Activated T-helper 2 cell treated with anti-CD3 and anti-CD28 coated beads, Interferon-gamma antibody, Interleukin-2, Interleukin-4, amounts not matched to agents 10 μg/mL and 5 μg/mL and 100 μg/mL, durations not matched to agents 14 hours and 24 hours and 36 hours (primary cell): ENCODE measurements at regions of chrX and their contacts with region 1.

Region 1: GRCh38 chrX:132631579-132632232 is 142.9 kb upstream of the MBNL3 start:
- DNase-seq: no peak
- H3K4me3 Mint-ChIP-seq: no peak overlapping the region
- H3K27ac Mint-ChIP-seq: no peak overlapping the region
- H3K4me1 Mint-ChIP-seq: no peaks in the 10 kb centered on the region
- H3K27me3 Mint-ChIP-seq: peaks cover 4% of the 10 kb centered on the region

Region 2: DNA sequence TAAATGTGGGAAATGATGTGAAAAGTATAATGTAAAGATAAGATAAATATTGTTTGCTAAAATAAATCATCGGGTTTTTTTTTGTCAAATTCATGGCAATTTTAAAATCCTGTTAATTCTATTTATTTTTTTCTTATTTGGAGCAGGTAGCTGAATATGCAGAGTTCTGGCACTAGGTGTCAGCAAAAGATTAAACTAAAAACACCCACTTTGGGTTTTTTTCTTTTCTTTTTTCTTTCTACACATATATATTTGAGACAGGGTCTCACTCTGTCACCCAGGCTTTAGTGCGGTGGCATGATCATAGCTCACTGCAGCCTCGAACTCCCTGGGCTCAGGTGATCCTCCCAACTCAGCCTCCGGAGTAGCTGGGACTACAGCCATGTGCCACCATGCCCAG is 405.5 kb before region 1 on chrX:
- intact Hi-C with region 1: loop called (anchors 5 kb)
- DNase-seq: no peak
- H3K4me3 Mint-ChIP-seq: no peak overlapping the region
- H3K27ac Mint-ChIP-seq: no peak overlapping the region
- H3K4me1 Mint-ChIP-seq: peaks cover 10% of the 10 kb centered on the region
- H3K27me3 Mint-ChIP-seq: no peaks in the 10 kb centered on the region

Region 3: DNA sequence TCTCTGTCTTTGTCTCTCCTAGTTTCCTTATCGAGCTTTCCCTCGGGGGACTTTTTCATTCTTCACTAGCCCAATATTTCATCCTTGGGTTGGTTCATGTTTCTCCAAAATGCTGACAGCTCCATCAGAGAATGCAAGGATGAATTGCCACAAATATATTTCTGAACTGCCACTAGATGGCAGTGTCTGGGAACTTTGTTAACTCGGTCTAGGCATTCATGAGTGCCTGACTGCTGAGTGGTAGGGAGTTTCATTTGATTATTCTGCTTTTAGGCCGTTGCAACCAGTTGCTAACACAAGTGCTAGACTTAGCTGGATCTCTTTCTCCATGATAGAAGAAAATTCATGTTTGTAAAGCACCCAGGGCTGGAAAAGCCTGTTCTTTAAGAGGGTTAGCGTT is 338.9 kb before region 1 on chrX:
- intact Hi-C with region 1: loop called (anchors 1 kb)
- DNase-seq: peak; percentile 8
- H3K4me3 Mint-ChIP-seq: no peak overlapping the region
- H3K27ac Mint-ChIP-seq: no peak overlapping the region
- H3K4me1 Mint-ChIP-seq: no peaks in the 10 kb centered on the region
- H3K27me3 Mint-ChIP-seq: peaks cover 4% of the 10 kb centered on the region

Region 4: GRCh38 chrX:132676561-132677186 is 45.0 kb after region 1 on chrX:
- intact Hi-C with region 1: no loop called
- DNase-seq: no peak
- H3K4me3 Mint-ChIP-seq: no peak overlapping the region
- H3K27ac Mint-ChIP-seq: no peak overlapping the region
- H3K4me1 Mint-ChIP-seq: peaks cover 5% of the 10 kb centered on the region
- H3K27me3 Mint-ChIP-seq: no peaks in the 10 kb centered on the region